ENCODE measurements at regions of chr14 and their contacts with region 1.

Region 1: DNA sequence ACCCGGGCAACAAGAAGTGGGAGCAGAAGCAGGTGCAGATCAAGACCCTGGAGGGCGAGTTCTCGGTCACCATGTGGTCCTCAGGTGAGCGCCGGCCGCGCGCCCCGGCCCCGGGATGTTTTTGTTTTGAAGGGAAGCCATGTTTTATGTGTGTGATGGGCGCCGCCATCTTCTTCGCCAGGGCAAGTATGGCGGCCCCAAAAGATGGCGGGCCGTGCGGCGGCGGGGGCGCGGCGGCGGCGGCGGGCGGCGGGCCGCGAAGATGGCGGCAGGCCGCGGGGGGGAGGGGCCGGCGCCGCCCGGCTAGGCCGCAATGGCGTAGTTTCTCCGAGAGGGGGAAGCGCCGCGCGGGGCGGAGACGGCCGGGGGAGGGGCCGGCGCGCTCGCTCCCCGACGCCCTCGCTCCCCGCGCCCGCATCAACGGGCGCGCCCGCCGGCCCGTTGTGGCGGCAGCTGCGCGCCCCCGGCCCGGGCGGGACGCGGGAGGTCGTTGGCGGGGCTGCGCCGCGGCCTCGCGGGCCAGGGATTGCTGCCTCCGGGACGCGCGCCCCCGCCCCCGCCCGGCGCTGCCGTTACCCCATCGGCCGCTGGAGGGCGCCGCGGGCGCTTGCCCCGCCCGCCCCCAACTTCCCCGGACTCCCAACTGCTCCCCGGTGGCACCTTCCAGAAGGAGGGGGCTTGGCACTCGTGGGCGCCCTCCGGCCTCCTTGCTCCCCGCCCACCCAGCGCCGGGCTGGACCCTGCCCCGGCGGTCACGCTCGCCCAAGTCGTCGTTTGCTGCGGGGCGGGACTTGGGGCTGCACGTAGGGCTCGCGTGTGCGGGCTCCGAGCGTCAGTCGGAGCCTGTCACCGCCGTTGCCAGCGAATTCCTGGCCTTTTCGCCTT is 1.1 kb downstream of the YY1 start:
- DNase-seq: peak; percentile 75
- ATAC-seq: peak; percentile 78
- H3K4me3 ChIP-seq: peak overlapping the region; percentile 69 to 98 (median 96)
- H3K27ac ChIP-seq: peak overlapping the region; percentile 85
- H3K4me1 ChIP-seq: peaks cover 62% of the 10 kb centered on the region
- H3K27me3 ChIP-seq: no peaks in the 10 kb centered on the region; a peak in 1 of 5 replicates
- CTCF ChIP-seq: peak; percentile 67
- EP300 ChIP-seq: no peak
- POLR2A ChIP-seq: peak; percentile 56
- RAD21 ChIP-seq: no peak

Region 2: DNA sequence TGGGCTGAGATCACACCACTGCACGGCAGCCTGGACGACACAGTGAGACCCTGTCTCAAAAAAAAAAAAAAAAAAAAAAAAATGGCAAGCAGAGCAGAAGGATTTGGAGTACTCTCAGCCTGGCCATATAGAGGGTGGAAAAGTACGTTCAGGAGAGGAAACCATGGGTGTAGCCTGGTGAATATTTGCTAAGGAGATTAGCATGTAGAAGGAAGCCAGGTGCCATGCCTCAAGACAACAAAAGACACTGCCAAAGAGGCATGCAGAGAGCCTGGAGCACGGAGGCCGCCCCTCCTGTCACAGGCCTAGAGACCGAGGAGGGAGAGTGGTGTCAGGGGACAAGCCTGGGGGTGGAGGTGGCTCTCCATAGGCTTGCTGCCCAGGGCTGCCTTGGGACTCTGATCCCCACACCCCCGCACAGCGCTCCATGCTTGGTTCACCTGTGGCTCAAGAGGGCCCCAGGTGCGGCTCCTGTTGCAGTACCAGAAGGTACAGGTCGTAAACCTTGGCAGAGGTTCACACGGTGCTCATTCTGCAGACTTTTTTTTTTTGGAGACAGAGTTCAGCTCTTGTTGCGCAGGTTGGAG is 52.7 kb before region 1 on chr14:
- CTCF ChIA-PET with region 1: no interaction called
- POLR2A ChIA-PET with region 1: no interaction called
- in situ Hi-C with region 1: no loop called
- intact Hi-C with region 1: no loop called
- DNase-seq: no peak
- ATAC-seq: peak; percentile 56
- H3K4me3 ChIP-seq: no peak overlapping the region
- H3K27ac ChIP-seq: no peak overlapping the region
- H3K4me1 ChIP-seq: peaks cover 33% of the 10 kb centered on the region
- H3K27me3 ChIP-seq: no peaks in the 10 kb centered on the region
- CTCF ChIP-seq: no peak
- EP300 ChIP-seq: no peak
- POLR2A ChIP-seq: no peak
- RAD21 ChIP-seq: no peak

Region 3: GRCh38 chr14:100203949-100204834 is 35.9 kb before region 1 on chr14:
- CTCF ChIA-PET with region 1: no interaction called
- POLR2A ChIA-PET with region 1: interaction called, 5 read pairs
- in situ Hi-C with region 1: no loop called
- intact Hi-C with region 1: loop called (anchors 2 kb)
- DNase-seq: peak; percentile 96
- ATAC-seq: peak; percentile 89
- H3K4me3 ChIP-seq: no peak overlapping the region; a peak in 1 of 6 replicates
- H3K27ac ChIP-seq: peak overlapping the region; percentile 59
- H3K4me1 ChIP-seq: peaks cover 50% of the 10 kb centered on the region
- H3K27me3 ChIP-seq: no peaks in the 10 kb centered on the region
- CTCF ChIP-seq: peak; percentile 11; the same call in 1 of the 2 replicates
- EP300 ChIP-seq: peak in 1 of 2 experiments; percentile 79; a peak in 2 of 4 replicates
- POLR2A ChIP-seq: no peak
- RAD21 ChIP-seq: no peak

Region 4: GRCh38 chr14:100256339-100256895 is 16.3 kb after region 1 on chr14:
- CTCF ChIA-PET with region 1: no interaction called
- POLR2A ChIA-PET with region 1: no interaction called
- in situ Hi-C with region 1: no loop called
- intact Hi-C with region 1: no loop called
- DNase-seq: no peak
- ATAC-seq: no peak
- H3K4me3 ChIP-seq: no peak overlapping the region
- H3K27ac ChIP-seq: no peak overlapping the region
- H3K4me1 ChIP-seq: peaks cover 6% of the 10 kb centered on the region; the same call in 1 of the 2 replicates
- H3K27me3 ChIP-seq: no peaks in the 10 kb centered on the region
- CTCF ChIP-seq: no peak
- EP300 ChIP-seq: no peak
- POLR2A ChIP-seq: no peak
- RAD21 ChIP-seq: no peak

Region 5: GRCh38 chr14:100605706-100606686 is 365.9 kb after region 1 on chr14:
- CTCF ChIA-PET with region 1: no interaction called
- POLR2A ChIA-PET with region 1: no interaction called
- in situ Hi-C with region 1: no loop called
- intact Hi-C with region 1: no loop called
- DNase-seq: no peak
- ATAC-seq: no peak
- H3K4me3 ChIP-seq: no peak overlapping the region
- H3K27ac ChIP-seq: no peak overlapping the region
- H3K4me1 ChIP-seq: no peaks in the 10 kb centered on the region
- H3K27me3 ChIP-seq: peaks cover 5 to 53% of the 10 kb centered on the region in 2 experiments; a peak in 4 of 5 replicates
- CTCF ChIP-seq: no peak
- EP300 ChIP-seq: no peak
- POLR2A ChIP-seq: no peak
- RAD21 ChIP-seq: no peak